B cell (primary cell): ENCODE measurements at regions of chr15 and their contacts with region 1.

Region 1: GRCh38 chr15:41989259-41989933 is 17.0 kb upstream of the EHD4 start:
- DNase-seq: peak; percentile 82
- ATAC-seq: peak; percentile 99
- H3K4me3 ChIP-seq: no peak overlapping the region
- H3K4me3 Mint-ChIP-seq: no peak overlapping the region
- H3K27ac ChIP-seq: no peak overlapping the region
- H3K27ac Mint-ChIP-seq: no peak overlapping the region
- H3K4me1 ChIP-seq: no peaks in the 10 kb centered on the region
- H3K4me1 Mint-ChIP-seq: no peaks in the 10 kb centered on the region
- H3K27me3 ChIP-seq: peaks cover 0 to 9% (median 4%) of the 10 kb centered on the region in 4 experiments
- H3K27me3 Mint-ChIP-seq: no peaks in the 10 kb centered on the region
- CTCF ChIP-seq: peak; percentile 99

Region 2: GRCh38 chr15:42046579-42046978 is 57.2 kb after region 1 on chr15:
- CTCF ChIA-PET with region 1: interaction called, 12 read pairs
- POLR2A ChIA-PET with region 1: no interaction called
- intact Hi-C with region 1: no loop called
- DNase-seq: no peak
- ATAC-seq: no peak
- H3K4me3 ChIP-seq: no peak overlapping the region
- H3K4me3 Mint-ChIP-seq: no peak overlapping the region
- H3K27ac ChIP-seq: no peak overlapping the region
- H3K27ac Mint-ChIP-seq: no peak overlapping the region
- H3K4me1 ChIP-seq: no peaks in the 10 kb centered on the region
- H3K4me1 Mint-ChIP-seq: no peaks in the 10 kb centered on the region
- H3K27me3 ChIP-seq: no peaks in the 10 kb centered on the region
- H3K27me3 Mint-ChIP-seq: peaks cover 14% of the 10 kb centered on the region
- CTCF ChIP-seq: no peak

Region 3: GRCh38 chr15:42056934-42057779 is 67.8 kb after region 1 on chr15:
- CTCF ChIA-PET with region 1: interaction called, 109 read pairs
- POLR2A ChIA-PET with region 1: no interaction called
- intact Hi-C with region 1: no loop called
- DNase-seq: peak; percentile 58
- ATAC-seq: peak; percentile 68
- H3K4me3 ChIP-seq: peak overlapping the region in 4 of 5 experiments; percentile 15 to 39 (median 28)
- H3K4me3 Mint-ChIP-seq: peak overlapping the region; percentile 4
- H3K27ac ChIP-seq: no peak overlapping the region
- H3K27ac Mint-ChIP-seq: no peak overlapping the region
- H3K4me1 ChIP-seq: peaks cover 7% of the 10 kb centered on the region in 2 donors
- H3K4me1 Mint-ChIP-seq: peaks cover 9% of the 10 kb centered on the region
- H3K27me3 ChIP-seq: peaks cover 0 to 26% (median 13%) of the 10 kb centered on the region in 4 experiments
- H3K27me3 Mint-ChIP-seq: peaks cover 31% of the 10 kb centered on the region
- CTCF ChIP-seq: peak; percentile 20

Region 4: GRCh38 chr15:42084460-42085235 is 95.3 kb after region 1 on chr15:
- CTCF ChIA-PET with region 1: interaction called, 113 read pairs
- POLR2A ChIA-PET with region 1: no interaction called
- intact Hi-C with region 1: loop called (anchors 1 kb)
- DNase-seq: peak; percentile 66
- ATAC-seq: peak; percentile 70
- H3K4me3 ChIP-seq: no peak overlapping the region
- H3K4me3 Mint-ChIP-seq: no peak overlapping the region
- H3K27ac ChIP-seq: no peak overlapping the region
- H3K27ac Mint-ChIP-seq: no peak overlapping the region
- H3K4me1 ChIP-seq: peaks cover 0 to 7% of the 10 kb centered on the region in 2 donors
- H3K4me1 Mint-ChIP-seq: peaks cover 4% of the 10 kb centered on the region
- H3K27me3 ChIP-seq: peaks cover 0 to 20% (median 2%) of the 10 kb centered on the region in 4 experiments
- H3K27me3 Mint-ChIP-seq: peaks cover 24% of the 10 kb centered on the region
- CTCF ChIP-seq: peak; percentile 85

Region 5: DNA sequence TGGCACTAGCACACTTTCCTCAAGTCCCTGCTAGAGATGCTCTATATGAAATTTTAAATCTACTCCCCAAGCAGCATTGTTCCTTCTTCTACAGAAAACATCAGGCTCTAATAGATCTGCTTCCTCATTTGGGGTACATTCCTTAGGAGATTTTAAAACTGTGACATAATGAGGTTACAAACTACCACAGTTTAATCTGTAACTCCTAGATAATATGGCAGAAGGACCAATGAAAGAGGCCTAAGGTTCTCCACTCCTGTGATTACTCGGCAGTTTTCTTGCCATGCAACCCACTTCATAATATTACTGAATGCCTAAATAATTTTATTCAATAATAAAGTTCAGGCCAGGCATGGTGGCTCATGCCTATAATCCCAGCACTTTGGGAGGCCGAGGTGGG is 485.4 kb after region 1 on chr15:
- CTCF ChIA-PET with region 1: no interaction called
- POLR2A ChIA-PET with region 1: no interaction called
- intact Hi-C with region 1: loop called (anchors 2 kb)
- DNase-seq: no peak
- ATAC-seq: no peak
- H3K4me3 ChIP-seq: no peak overlapping the region
- H3K4me3 Mint-ChIP-seq: no peak overlapping the region
- H3K27ac ChIP-seq: no peak overlapping the region
- H3K27ac Mint-ChIP-seq: peak overlapping the region; percentile 38
- H3K4me1 ChIP-seq: peaks cover 0 to 4% of the 10 kb centered on the region in 2 donors
- H3K4me1 Mint-ChIP-seq: peaks cover 36% of the 10 kb centered on the region
- H3K27me3 ChIP-seq: no peaks in the 10 kb centered on the region
- H3K27me3 Mint-ChIP-seq: no peaks in the 10 kb centered on the region
- CTCF ChIP-seq: no peak